IMR-90 (cell line): ENCODE measurements at regions of chr4 and their contacts with region 1.

Region 1: GRCh38 chr4:85741921-85742591 is 267.1 kb downstream of the ARHGAP24 start:
- DNase-seq: no peak
- ATAC-seq: no peak
- H3K4me3 ChIP-seq: no peak overlapping the region
- H3K27ac ChIP-seq: no peak overlapping the region
- H3K4me1 ChIP-seq: peaks cover 2% of the 10 kb centered on the region; the same call in 1 of the 2 replicates
- H3K27me3 ChIP-seq: no peaks in the 10 kb centered on the region
- CTCF ChIP-seq: no peak
- POLR2A ChIP-seq: no peak
- RAD21 ChIP-seq: no peak

Region 2: GRCh38 chr4:85474818-85475630 is 267.0 kb before region 1 on chr4 and contains the start of gene ARHGAP24:
- CTCF ChIA-PET with region 1: no interaction called
- POLR2A ChIA-PET with region 1: no interaction called
- dilution Hi-C with region 1: no loop called
- in situ Hi-C with region 1: no loop called
- intact Hi-C with region 1: loop called (anchors 5 kb)
- DNase-seq: peak; percentile 83
- ATAC-seq: peak; percentile 96
- H3K4me3 ChIP-seq: peak within 1 kb of the TSS; percentile 47
- H3K27ac ChIP-seq: no peak within 1 kb of the TSS
- H3K4me1 ChIP-seq: no peaks in the 10 kb centered on the region
- H3K27me3 ChIP-seq: peaks cover 8% of the 10 kb centered on the region
- CTCF ChIP-seq: no peak
- POLR2A ChIP-seq: no peak
- RAD21 ChIP-seq: no peak
- total RNA-seq, gene ARHGAP24: 21.9 and 24.0 TPM in 2 replicates

Region 3: DNA sequence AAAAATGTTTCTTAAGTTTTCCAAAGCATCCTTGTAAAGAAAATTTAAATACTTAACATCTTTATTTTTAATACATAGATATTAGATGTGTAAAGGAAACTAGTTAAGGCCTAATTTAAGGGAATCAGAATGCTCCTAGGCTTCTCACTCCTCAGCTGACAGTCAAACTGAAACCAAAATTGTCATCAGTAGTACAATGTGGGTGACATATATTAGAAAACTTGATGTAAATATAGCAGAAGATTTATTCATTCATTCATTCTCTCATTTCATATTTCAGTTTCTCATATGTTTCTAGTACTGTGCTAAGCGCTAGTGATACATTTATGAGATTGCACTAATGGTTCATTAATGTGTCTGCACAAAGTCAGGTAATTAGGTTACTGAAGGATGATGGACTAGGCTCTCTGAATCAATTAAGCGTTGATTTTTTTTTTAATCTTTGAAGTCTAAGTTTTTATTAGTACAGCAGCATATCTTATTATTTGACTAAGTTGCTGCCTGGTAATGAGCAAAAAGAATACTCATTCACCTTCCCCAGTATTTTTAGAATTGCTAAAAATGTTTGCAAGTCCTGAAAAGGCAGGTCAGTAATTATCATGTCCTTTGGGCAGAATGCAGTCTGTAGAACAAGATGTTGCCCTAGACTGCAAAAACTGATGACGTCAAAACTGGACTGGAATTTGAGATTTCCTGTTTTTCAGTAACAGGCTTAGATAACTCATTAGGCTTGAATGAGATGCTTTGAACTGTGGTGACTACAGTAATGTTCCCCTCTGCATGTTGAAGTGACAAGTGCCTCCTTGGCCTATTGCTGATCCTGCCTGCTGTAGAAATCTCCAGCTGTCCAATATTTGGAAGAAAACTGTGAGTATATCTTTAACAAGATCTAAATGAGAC is 138.4 kb before region 1 on chr4:
- CTCF ChIA-PET with region 1: no interaction called
- POLR2A ChIA-PET with region 1: no interaction called
- dilution Hi-C with region 1: no loop called
- in situ Hi-C with region 1: no loop called
- intact Hi-C with region 1: no loop called
- DNase-seq: no peak
- ATAC-seq: no peak
- H3K4me3 ChIP-seq: no peak overlapping the region
- H3K27ac ChIP-seq: no peak overlapping the region
- H3K4me1 ChIP-seq: no peaks in the 10 kb centered on the region
- H3K27me3 ChIP-seq: no peaks in the 10 kb centered on the region
- CTCF ChIP-seq: no peak
- POLR2A ChIP-seq: no peak
- RAD21 ChIP-seq: no peak